HepG2 (cell line): ENCODE measurements at regions of chr2 and their contacts with region 1.

Region 1: DNA sequence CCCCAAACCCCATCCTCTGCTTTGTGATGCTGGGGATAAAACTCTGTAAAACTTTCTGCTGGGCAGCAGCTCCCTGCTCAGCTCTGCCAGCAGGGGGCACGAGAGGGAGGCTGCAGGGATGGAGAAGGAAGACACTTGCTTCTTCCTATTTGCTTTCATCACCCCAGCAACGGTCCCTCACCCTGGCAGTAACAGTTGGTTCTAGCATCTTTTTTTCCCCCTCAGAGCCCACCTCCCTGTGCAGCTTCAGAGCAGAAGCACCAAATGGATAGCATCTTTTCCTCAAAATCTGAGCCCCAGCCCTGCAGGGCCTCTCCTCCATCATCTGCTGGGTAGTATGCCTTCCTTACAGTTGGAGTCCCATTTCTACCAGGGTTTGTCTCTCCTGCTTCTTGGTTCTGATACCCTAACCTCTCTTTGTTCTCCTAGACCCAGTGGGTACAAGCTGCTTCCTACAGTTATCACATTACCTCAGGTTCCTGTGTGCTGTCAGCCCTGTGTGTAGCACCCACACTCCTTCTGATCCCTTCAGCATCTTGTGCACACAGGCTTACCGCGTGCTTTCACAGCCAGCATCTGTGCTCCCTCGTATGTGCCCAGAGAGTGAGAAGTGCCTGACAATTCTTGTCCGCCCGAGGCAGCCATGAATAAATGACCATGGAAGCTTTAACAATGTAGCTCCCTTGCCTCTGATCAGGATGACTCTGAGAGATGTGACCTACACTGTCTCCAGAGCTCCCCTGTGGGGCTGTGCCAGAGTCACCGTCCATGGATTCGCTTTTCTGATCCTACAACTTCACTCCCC is 14.5 kb downstream of the CKAP2L start:
- DNase-seq: peak; percentile 62
- ATAC-seq: peak; percentile 93
- H3K4me3 ChIP-seq: no peak overlapping the region
- H3K27ac ChIP-seq: peak overlapping the region; percentile 4
- H3K4me1 ChIP-seq: peaks cover 32% of the 10 kb centered on the region
- H3K27me3 ChIP-seq: no peaks in the 10 kb centered on the region
- CTCF ChIP-seq: peak; percentile 95
- EP300 ChIP-seq: no peak
- POLR2A ChIP-seq: no peak
- RAD21 ChIP-seq: peak; percentile 96

Region 2: GRCh38 chr2:112674229-112674628 is 75.7 kb before region 1 on chr2:
- CTCF ChIA-PET with region 1: no interaction called
- POLR2A ChIA-PET with region 1: no interaction called
- in situ Hi-C with region 1: no loop called
- intact Hi-C with region 1: no loop called
- DNase-seq: no peak
- ATAC-seq: no peak
- H3K4me3 ChIP-seq: no peak overlapping the region
- H3K27ac ChIP-seq: no peak overlapping the region
- H3K4me1 ChIP-seq: peaks cover 18% of the 10 kb centered on the region
- H3K27me3 ChIP-seq: no peaks in the 10 kb centered on the region; a peak in 1 of 5 replicates
- CTCF ChIP-seq: no peak
- EP300 ChIP-seq: no peak
- POLR2A ChIP-seq: no peak
- RAD21 ChIP-seq: no peak

Region 3: DNA sequence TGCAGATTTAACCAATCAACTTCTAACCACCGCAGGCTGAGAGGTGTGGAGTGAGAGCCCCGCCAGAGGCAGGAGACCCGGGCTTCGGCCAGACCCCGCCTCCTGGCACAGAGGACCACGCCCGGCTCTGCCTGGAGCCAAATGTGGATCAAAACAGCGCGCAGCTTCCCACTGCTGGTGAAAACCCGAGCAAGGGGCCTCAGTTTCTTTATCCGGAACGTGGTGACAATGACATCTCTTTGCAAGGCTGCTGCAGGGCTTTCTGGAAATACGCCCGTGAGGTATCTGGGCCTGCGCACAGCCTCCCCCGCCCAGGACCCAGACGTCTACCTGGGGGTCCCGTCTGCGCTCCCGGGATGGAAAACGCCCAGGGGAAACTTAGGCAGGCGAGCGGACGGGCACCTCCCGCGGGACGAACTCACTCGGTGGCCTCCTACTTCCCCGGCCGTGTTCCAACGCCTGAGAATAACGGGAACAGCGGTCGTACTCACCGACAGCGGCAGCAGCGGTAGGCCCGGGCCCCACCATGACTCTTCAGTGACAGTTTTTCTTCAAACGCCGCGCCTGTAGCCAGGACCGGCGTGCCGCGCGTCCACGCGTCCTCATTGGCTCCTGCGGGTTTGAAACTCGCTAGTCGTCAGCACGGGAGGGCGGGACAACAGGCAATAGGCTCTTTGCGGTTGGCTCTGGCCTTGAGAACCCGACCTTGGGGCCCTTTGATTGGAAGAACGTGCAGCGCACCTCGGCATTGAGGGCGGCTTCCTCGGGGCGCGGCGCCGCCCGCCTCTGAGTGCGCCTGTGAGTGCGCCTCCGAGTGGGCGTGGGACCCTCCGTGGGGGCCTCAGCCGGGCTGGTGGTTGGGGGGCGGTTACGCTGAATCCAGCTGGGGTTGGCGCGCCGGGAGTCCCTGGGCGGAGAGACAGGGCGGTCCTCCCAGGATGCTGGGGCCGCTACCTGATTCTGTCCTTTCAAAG is 14.4 kb after region 1 on chr2 and contains the start of gene CKAP2L:
- CTCF ChIA-PET with region 1: no interaction called
- POLR2A ChIA-PET with region 1: no interaction called
- in situ Hi-C with region 1: no loop called
- intact Hi-C with region 1: loop called (anchors 2 kb)
- DNase-seq: peak; percentile 98
- ATAC-seq: peak; percentile 96
- H3K4me3 ChIP-seq: peak within 1 kb of the TSS; percentile 80 to 91 (median 90)
- H3K27ac ChIP-seq: peak within 1 kb of the TSS; percentile 72
- H3K4me1 ChIP-seq: peaks cover 58% of the 10 kb centered on the region
- H3K27me3 ChIP-seq: no peaks in the 10 kb centered on the region; a peak in 1 of 5 replicates
- CTCF ChIP-seq: peak; percentile 57
- EP300 ChIP-seq: peak in 1 of 2 experiments; percentile 8; a peak in 1 of 4 replicates
- POLR2A ChIP-seq: peak; percentile 29 to 64; a peak in 3 of 4 replicates
- RAD21 ChIP-seq: no peak; the same call in none of the 2 replicates
- total RNA-seq, gene CKAP2L: 9.5 and 21.5 TPM in 2 replicates

Region 4: DNA sequence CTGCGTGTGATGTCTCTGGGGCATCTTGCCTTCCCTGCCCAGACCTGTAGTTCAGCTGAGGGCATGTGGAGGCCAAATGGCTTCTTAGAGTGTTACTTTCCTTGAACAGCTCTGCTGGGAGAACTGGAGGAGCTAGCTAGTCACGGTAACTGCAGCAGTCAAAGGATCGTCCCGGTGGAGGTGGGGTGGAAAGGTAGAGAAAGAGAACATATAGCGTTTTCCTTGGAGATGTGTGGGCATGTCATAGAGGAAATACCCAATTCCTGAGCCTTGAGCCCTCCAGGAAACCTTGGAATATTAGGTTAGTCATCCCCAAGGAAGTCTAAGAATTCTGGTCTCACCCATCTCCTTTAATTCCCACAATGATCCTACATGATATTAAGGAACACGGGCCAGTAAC is 127.5 kb after region 1 on chr2:
- CTCF ChIA-PET with region 1: interaction called, 86 read pairs
- POLR2A ChIA-PET with region 1: no interaction called
- in situ Hi-C with region 1: loop called (anchors 5 kb)
- intact Hi-C with region 1: no loop called
- DNase-seq: no peak
- ATAC-seq: no peak
- H3K4me3 ChIP-seq: no peak overlapping the region
- H3K27ac ChIP-seq: no peak overlapping the region
- H3K4me1 ChIP-seq: peaks cover 28% of the 10 kb centered on the region
- H3K27me3 ChIP-seq: peaks cover 0 to 12% of the 10 kb centered on the region in 2 experiments; a peak in 1 of 5 replicates
- CTCF ChIP-seq: no peak
- EP300 ChIP-seq: no peak
- POLR2A ChIP-seq: no peak
- RAD21 ChIP-seq: no peak

Region 5: DNA sequence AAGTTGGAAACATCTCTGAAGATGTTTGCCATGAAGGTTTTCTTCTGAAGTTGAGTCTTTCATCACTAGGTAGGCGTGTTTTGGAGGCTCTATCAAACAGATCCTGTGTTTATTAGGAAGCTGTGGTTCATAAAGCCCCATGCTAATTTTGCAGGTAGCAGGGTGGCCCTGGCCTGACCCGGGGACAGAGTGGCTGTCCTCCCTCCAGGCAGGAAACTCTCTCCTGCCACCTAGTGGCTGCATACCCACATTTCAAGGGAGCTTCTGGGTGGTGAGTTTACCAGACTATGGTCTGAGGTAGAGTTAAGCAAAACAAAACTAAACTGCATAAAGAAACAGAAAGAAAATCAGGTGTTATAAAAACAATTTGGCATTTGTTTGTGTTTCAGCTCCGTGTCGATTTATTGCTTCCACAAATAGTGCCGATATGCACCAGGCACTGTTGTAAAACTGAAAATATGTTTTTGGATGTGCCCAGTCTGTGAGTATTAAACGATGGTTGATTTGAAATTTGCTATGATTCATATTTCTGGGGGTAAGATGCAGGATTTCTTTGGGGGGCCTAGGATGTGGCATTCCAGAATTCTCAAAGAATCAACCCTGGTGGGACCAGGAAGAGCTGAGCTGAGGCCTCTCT is 135.0 kb after region 1 on chr2:
- CTCF ChIA-PET with region 1: interaction called, 86 read pairs
- POLR2A ChIA-PET with region 1: no interaction called
- in situ Hi-C with region 1: no loop called
- intact Hi-C with region 1: loop called (anchors 1 kb)
- DNase-seq: peak; percentile 59
- ATAC-seq: peak; percentile 92
- H3K4me3 ChIP-seq: no peak overlapping the region
- H3K27ac ChIP-seq: no peak overlapping the region
- H3K4me1 ChIP-seq: peaks cover 31% of the 10 kb centered on the region
- H3K27me3 ChIP-seq: 0 out of 5 replicates have a peak, but pooled peaks cover 0 to 5% of the 10 kb centered on the region in 2 experiments
- CTCF ChIP-seq: peak; percentile 94
- EP300 ChIP-seq: no peak
- POLR2A ChIP-seq: no peak
- RAD21 ChIP-seq: peak; percentile 92

Region 6: GRCh38 chr2:112941753-112942658 is 192.0 kb after region 1 on chr2:
- CTCF ChIA-PET with region 1: interaction called, 25 read pairs
- POLR2A ChIA-PET with region 1: interaction called, 4 read pairs
- in situ Hi-C with region 1: loop called (anchors 5 kb)
- intact Hi-C with region 1: loop called (anchors 1 kb)
- DNase-seq: peak; percentile 70
- ATAC-seq: peak; percentile 99
- H3K4me3 ChIP-seq: no peak overlapping the region
- H3K27ac ChIP-seq: no peak overlapping the region
- H3K4me1 ChIP-seq: peaks cover 8% of the 10 kb centered on the region; the same call in 1 of the 2 replicates
- H3K27me3 ChIP-seq: no peaks in the 10 kb centered on the region; a peak in 1 of 5 replicates
- CTCF ChIP-seq: peak; percentile 98
- EP300 ChIP-seq: no peak
- POLR2A ChIP-seq: no peak
- RAD21 ChIP-seq: peak; percentile 86

Region 7: DNA sequence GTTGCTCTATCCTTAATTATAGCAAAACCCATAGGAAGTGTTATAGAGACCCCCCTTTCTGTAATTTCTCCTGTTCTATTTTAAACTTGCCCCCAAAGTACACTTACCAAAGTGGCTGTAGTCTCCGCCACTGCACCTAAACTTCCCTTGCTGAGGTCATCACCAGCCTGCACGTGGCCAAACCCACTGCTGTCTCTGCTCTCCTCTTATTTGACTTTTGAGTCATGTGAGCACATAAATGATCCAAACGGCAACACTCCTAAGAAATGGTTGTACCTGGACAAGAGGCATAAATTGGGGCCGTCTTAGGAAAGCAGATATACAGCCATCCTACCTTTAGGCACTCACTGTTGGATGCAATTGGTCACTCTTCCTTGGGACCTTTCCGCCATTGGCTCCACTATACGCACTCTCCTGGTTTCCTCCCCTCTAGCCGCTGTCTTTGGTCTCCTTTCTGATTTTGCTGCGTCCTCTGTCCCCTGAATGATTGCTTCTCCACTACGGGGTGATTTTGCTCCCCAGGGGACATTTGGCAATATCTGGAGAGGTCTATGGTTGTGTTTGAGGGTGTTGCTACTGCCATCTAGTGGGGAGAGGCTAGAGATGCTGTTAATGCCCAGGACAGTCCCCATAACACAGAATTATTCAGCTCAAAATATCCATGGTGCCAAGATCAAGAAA is 208.6 kb after region 1 on chr2:
- CTCF ChIA-PET with region 1: interaction called, 12 read pairs
- POLR2A ChIA-PET with region 1: no interaction called
- in situ Hi-C with region 1: no loop called
- intact Hi-C with region 1: loop called (anchors 1 kb)
- DNase-seq: peak; percentile 69
- ATAC-seq: peak; percentile 94
- H3K4me3 ChIP-seq: no peak overlapping the region
- H3K27ac ChIP-seq: no peak overlapping the region
- H3K4me1 ChIP-seq: no peaks in the 10 kb centered on the region
- H3K27me3 ChIP-seq: peaks cover 0 to 22% of the 10 kb centered on the region in 2 experiments; a peak in 4 of 5 replicates
- CTCF ChIP-seq: peak; percentile 80
- EP300 ChIP-seq: no peak
- POLR2A ChIP-seq: no peak
- RAD21 ChIP-seq: no peak